Posterior vena cava (tissue), 2 donors: ENCODE measurements at regions of chr14 and their contacts with region 1.

Region 1: GRCh38 chr14:104970231-104971101 is 7.7 kb downstream of the AHNAK2 start:
- DNase-seq: peak; percentile 97

Region 2: GRCh38 chr14:104864241-104865080 is 106.0 kb before region 1 on chr14:
- intact Hi-C with region 1: no loop called
- DNase-seq: peak; percentile 79

Region 3: DNA sequence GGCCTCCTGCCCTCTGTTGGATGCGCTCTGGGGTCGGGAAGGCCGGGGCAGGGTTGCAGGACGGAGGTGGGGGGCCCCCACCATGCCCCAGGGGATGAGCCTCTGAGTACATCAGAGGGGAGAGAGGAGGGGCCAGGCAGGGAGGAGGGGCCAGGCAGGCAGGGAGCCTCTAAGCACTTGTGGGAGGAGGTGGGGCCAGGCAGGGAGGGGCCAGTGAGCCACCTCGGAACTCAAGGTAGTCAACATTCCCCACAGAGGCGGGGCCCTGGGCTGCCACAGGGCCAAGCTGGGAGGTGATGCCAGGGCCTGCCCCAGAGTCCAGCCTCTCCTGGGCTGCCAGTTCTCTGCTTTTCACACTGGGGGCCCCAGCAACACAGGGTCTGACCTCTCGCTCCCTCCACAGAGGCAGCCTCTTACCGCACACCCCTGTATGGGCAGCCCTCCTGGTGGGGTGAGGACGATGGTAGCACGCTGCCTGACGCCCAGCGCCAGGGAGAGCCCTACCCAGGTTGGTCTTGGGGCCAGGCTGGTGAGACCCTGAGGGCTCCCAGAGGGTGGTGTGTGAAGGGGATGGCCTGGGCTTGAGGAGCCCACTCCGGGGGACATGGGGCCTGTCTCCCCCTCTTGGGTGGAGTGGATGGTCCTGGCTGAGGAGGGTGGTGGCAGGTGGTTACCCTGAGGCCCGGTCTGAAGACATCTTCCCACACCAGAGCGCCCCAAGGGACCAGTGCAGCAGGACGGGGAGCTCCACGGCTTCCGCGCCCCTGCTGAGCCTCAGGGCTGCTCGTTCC is 87.9 kb before region 1 on chr14:
- intact Hi-C with region 1: no loop called
- DNase-seq: no peak

Region 4: DNA sequence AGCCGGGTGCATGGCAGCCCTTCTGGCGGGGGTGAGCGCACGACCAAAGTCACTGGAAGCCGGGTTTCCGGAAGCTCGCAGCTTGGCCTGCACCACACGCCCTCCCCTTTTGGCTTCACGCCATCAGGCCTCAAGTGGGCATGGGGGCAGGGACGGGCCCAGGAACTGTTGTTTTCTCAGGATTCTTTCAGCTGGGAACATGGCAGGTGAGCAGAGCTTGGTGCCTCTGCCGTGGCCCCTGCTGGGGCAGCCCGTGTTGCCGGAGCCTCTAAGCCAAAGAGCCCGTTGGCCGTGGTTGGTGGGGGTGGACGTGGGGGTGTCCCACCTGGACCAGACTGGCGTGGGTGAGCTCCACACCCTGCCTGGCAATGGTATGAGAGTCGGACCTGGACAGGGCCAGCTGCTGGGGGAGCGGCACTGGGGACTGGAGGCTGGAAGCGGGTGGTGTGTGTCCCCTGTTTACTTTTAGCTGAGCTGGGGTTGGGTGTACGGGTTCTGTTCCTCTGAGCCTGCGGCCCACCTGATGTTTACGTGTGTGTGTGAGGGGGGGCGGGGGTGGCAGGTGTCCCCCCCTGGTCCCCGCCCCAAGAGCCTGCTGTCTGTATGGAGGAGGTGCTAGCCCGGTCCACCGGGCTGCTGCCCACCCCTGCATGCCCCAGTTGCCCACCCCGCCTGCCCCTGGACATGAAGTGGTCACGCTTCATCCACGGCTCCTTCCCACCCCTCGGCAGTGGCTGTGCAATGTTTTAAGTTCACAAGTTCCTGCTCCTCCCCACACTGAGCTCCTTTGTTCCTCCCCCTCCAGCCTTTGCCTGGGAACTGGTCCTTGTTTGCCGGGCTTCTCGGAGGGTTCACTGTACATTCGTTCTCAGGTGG is 74.4 kb before region 1 on chr14:
- intact Hi-C with region 1: loop called in 1 of 2 experiments (anchors 5 kb)
- DNase-seq: peak; percentile 80

Region 5: GRCh38 chr14:104932676-104933631 is 37.5 kb before region 1 on chr14:
- intact Hi-C with region 1: loop called in 1 of 2 experiments (anchors 5 kb)
- DNase-seq: peak; percentile 97

Region 6: DNA sequence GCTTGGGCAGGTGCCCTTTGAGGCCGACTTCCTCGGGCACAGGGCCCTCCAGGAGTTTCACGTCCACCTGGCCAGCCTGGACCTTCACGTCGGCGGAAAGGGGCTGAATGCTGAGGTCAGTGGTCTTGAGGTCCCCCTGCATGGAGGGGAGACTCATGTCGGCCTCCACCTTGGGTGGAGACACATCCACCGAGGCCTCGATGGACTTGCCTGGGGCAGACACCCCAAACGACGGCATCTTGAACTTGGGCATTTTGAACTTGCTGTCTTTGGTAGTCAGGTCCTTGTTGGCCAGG is 21.8 kb before region 1 on chr14:
- intact Hi-C with region 1: loop called in 1 of 2 experiments (anchors 1 kb)
- DNase-seq: peak; percentile 10

Region 7: DNA sequence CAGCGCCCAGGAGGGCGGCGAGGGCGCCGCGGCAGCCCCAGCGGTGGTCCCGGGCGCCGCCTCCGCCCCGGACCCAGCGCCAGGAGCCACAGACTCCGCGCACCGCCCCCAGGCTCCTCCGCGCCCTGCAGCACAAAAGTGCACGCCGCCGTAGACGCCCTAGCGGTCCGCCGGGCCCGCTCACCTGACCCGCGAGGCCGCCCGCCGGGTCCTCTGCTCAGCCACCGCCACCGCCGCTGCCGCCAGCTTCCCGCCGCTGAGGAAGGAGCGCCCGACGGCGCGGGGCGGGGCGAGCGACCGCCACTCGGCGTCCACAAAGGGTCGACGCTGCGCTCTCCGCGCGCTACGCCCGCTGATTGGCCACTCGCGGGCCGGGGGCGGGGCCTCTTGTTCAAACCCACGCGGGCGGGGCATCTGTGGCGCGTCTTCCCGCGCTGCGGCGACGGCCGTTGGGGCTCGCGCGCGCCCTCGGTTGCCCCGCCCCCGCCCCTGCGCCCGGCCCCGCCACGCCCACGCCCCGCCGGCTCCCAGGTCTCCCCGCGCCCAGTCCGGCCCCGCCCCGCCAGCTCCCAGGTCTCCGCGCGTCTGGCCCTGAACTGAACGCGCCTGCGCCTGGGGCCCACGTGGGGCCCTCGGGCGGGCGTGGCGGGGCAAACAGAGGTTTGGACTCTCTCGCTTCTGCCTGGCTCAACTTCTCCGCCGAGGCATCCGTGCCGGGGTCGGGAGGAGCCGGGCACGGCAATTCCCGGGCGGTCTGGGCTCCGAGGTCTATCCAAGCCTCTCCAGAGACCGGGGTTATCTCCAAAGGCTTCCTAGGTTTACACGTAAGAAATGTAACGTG is 50.6 kb after region 1 on chr14 and contains the start of gene CDCA4:
- intact Hi-C with region 1: loop called (anchors 1 to 5 kb)
- DNase-seq: peak; percentile 99
- total RNA-seq, gene CDCA4: 4.3 to 4.8 TPM